ENCODE measurements at regions of chr9 and their contacts with region 1.

Region 1: DNA sequence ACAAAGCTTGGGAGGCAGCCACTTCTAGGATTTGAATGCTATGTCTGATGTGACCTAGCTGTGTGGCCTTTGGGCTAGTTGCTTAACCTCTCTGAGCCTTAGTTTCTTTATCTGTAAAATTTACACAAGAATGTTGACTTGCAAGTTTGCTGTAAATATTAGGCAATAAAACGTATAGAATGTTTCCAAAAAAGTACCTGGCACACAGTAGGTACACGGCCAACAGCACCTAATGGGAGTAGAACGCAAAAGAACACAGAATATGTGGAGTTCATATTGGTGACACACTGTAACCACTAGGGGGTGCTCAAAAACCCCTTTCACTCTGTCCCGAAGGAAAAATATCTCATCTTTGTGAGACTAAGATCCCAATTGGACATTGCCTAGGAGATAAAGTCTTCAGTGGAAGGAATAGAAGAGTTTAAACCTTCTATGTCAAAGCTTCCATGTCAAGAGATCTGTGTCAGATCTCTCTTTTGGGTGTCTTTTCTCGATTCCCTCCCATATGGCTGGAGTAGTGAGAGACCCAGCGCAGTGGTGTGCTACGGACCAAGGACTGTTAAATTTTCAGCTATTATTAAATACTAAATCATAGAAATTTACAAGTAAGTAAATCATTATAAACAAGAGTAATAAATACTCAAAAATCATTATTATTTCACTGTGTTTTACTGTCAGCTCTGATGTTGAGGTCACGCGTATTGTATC is 145.4 kb upstream of the RAD23B start:
- DNase-seq: peak; percentile 37
- H3K4me3 ChIP-seq: no peak overlapping the region
- H3K27ac ChIP-seq: no peak overlapping the region
- H3K4me1 ChIP-seq: no peaks in the 10 kb centered on the region
- CTCF ChIP-seq: peak; percentile 88

Region 2: GRCh38 chr9:106970219-106970975 is 167.3 kb before region 1 on chr9:
- CTCF ChIA-PET with region 1: no interaction called
- POLR2A ChIA-PET with region 1: no interaction called
- intact Hi-C with region 1: loop called (anchors 10 kb)
- DNase-seq: no peak
- H3K4me3 ChIP-seq: no peak overlapping the region
- H3K27ac ChIP-seq: no peak overlapping the region
- H3K4me1 ChIP-seq: no peaks in the 10 kb centered on the region
- CTCF ChIP-seq: no peak

Region 3: DNA sequence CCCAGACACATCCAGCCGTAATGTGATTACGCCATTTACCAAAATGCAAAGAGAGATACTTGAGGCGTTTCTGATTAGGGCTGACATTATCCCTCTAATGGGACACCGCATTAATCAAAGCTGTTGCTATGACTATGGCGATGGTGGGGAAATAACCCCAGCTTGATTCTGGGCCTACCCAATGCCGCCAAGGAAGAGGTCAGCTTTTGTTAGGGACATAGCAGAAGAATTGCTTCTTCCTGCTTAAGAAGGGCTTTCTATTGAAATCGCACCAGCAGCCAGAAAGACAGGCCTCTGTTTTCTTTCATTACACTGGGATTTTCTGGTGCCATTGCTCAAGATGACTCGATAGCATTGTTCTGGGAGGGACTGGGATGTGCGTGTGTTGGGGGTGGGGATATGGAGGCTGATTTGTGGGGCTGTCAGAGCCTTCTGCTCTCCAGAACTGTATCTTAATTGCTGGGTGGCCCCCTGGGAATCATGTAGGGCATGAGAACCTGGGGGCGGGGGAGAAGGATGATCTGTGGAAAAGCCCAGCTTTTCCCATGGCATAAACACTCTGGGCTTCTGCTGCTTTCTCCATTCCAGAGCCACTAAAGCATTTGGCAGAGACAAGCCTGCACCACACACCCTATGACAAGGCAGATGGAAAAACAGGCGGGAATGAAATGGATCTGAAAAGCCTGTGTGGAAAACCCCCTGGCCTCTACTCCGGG is 38.9 kb after region 1 on chr9:
- CTCF ChIA-PET with region 1: no interaction called
- POLR2A ChIA-PET with region 1: no interaction called
- intact Hi-C with region 1: no loop called
- DNase-seq: no peak
- H3K4me3 ChIP-seq: no peak overlapping the region
- H3K27ac ChIP-seq: no peak overlapping the region
- H3K4me1 ChIP-seq: no peaks in the 10 kb centered on the region
- CTCF ChIP-seq: no peak

Region 4: DNA sequence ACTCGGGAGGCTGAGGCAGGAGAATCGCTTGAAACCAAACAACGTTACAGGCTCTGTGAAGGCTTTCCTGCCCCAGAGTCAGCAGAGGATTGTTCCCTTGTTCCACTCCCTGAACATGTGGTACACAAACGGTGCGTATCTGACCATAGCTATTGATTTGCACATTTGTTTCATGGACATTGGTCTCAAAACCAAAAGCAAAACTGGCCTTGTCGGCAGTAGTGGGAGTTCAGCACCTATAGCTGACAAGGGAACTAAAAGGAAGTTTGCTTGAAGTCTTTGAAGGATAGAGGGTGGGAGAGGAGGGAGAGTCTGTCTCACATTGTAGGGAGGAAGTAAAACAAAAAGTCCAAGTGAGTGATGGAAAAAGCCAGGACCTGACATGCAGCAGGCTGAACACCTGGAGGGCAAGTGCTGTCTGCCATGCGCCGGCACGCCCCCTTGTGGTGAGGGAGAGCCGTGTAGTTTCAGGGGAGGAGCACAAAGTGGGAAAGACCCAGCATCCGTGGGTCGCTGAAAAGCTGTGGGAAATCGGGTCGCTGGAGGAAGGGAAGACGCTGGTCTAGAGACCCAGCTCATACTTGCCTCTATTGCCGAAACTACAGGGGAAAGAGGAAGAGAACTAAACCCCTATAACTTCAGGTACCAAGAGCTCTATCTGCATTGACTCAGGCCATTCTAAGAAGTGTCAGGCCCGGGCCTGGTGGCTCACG is 203.4 kb after region 1 on chr9:
- CTCF ChIA-PET with region 1: no interaction called
- POLR2A ChIA-PET with region 1: no interaction called
- intact Hi-C with region 1: loop called (anchors 10 kb)
- DNase-seq: peak; percentile 78
- H3K4me3 ChIP-seq: no peak overlapping the region
- H3K27ac ChIP-seq: no peak overlapping the region
- H3K4me1 ChIP-seq: no peaks in the 10 kb centered on the region
- CTCF ChIP-seq: peak; percentile 93

Measured in OCI-LY7 (cell line).